Spleen (tissue), 13 donors: ENCODE measurements at regions of chr7 and their contacts with region 1.

Region 1: GRCh38 chr7:5382281-5382892 is 41.2 kb downstream of the TNRC18 start:
- DNase-seq: no peak
- H3K4me3 ChIP-seq: no peak overlapping the region
- H3K27ac ChIP-seq: peak overlapping the region in 1 of 8 donors; percentile 57
- H3K4me1 ChIP-seq: peaks cover 5 to 79% (median 49%) of the 10 kb centered on the region in 6 donors
- H3K27me3 ChIP-seq: no peaks in the 10 kb centered on the region
- CTCF ChIP-seq: no peak
- POLR2A ChIP-seq: no peak

Region 2: DNA sequence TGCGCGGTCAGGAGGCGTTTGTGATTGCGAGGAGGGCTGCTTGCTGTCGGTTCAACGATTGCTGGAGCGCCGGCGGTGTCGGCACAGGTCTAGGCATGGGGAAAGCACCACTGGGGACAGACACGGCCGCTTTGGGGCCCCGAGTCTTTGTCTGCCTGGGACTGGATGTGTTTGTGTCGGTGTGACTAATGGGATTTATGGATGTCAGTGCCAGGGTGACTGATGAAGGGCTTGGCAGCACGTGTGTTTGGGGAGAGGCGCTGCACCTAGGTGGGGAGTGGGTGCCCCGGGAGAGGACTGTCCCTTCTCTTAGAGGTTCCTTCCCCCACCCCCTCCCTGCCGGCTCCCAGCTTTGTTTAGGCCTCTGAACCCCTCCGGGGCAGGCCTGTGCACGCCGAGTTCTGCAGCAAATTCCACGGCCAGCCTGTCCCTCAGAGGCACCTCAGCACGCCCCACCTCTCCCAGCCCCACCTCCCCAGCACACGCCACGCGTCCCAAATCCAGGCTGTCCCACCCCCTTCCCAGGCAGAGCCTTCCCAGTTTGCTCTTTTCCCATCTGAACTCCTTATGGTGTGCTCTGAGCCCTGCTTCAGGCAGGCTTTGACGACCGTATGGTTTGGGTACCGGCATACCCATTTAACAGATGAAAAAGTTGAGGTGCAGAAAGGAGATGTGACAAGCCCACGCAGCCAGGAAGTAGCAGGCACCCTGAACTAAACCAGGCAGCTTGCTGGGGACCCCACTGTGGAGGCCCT is 47.6 kb after region 1 on chr7:
- intact Hi-C with region 1: loop called (anchors 10 kb)
- DNase-seq: no peak
- H3K4me3 ChIP-seq: peak overlapping the region in 7 of 8 donors; percentile 24 to 81 (median 68)
- H3K27ac ChIP-seq: peak overlapping the region; percentile 48 to 100 (median 97)
- H3K4me1 ChIP-seq: peaks cover 21 to 57% (median 46%) of the 10 kb centered on the region in 6 donors
- H3K27me3 ChIP-seq: peaks cover 0 to 73% (median 44%) of the 10 kb centered on the region in 7 donors
- CTCF ChIP-seq: no peak
- POLR2A ChIP-seq: no peak

Region 3: GRCh38 chr7:5452937-5453540 is 70.7 kb after region 1 on chr7:
- intact Hi-C with region 1: no loop called
- DNase-seq: no peak
- H3K4me3 ChIP-seq: no peak overlapping the region
- H3K27ac ChIP-seq: no peak overlapping the region
- H3K4me1 ChIP-seq: peaks cover 0 to 17% (median 6%) of the 10 kb centered on the region in 6 donors
- H3K27me3 ChIP-seq: peaks cover 0 to 14% (median 0%) of the 10 kb centered on the region in 7 donors
- CTCF ChIP-seq: no peak
- POLR2A ChIP-seq: no peak